Caco-2 (cell line): ENCODE measurements at regions of chr14 and their contacts with region 1.

Region 1: DNA sequence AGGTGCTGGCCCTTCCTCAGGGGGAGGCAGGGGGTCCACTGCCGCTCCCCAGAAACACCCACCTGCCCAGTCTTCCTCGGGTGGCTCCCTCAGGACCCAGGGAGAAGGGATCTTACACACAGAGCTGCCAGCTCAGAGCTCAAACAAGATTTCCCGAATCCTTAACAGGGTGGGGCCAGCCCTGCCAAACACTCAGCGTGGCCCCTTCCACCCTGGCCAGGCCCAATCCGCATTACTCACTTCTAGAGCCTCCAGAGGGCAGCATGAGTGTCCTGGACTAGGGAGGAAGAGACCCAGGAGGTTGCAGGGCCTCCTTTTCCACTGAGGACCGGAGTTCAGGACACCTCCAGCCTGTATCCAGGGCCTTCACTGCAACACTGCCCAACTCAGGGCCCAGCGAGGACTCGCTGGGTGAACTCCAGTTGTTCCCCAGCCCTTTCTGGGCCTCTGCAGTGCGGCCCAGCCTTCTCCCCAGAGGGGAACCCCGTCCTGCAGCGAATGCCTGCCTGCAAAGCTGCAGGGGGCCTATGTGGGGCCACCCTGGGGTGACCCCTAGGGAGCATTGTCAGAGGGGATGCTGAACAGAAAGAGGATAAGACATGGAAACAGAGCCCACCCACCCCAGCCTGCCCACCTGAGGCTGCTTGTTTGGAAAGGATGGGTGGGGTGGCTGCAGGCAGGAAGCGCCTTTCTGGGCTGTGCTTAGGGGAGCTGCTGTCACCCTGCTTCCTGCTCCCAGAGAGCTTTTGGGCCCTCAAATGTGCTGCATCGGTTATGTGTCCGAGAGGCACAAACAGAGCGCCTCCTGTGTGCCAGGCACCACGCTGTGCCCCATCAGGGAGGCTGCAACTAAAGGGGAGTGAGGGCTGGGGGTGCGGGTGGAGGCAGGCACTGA is 43.8 kb downstream of the CCNK start:
- DNase-seq: peak; percentile 62 to 69
- H3K4me3 ChIP-seq: no peak overlapping the region
- H3K4me3 Mint-ChIP-seq: no peak overlapping the region
- H3K27ac Mint-ChIP-seq: peak overlapping the region; percentile 84
- H3K4me1 ChIP-seq: peaks cover 47% of the 10 kb centered on the region
- H3K4me1 Mint-ChIP-seq: peaks cover 8% of the 10 kb centered on the region
- H3K27me3 ChIP-seq: no peaks in the 10 kb centered on the region
- H3K27me3 Mint-ChIP-seq: no peaks in the 10 kb centered on the region
- CTCF ChIP-seq: peak; percentile 23 to 28

Region 2: GRCh38 chr14:99441157-99441870 is 83.7 kb before region 1 on chr14:
- CTCF ChIA-PET with region 1: no interaction called
- POLR2A ChIA-PET with region 1: no interaction called
- intact Hi-C with region 1: no loop called
- DNase-seq: peak in 1 of 2 experiments; percentile 38
- H3K4me3 ChIP-seq: no peak overlapping the region
- H3K4me3 Mint-ChIP-seq: no peak overlapping the region
- H3K27ac Mint-ChIP-seq: no peak overlapping the region
- H3K4me1 ChIP-seq: no peaks in the 10 kb centered on the region
- H3K4me1 Mint-ChIP-seq: no peaks in the 10 kb centered on the region
- H3K27me3 ChIP-seq: no peaks in the 10 kb centered on the region
- H3K27me3 Mint-ChIP-seq: no peaks in the 10 kb centered on the region
- CTCF ChIP-seq: peak in 1 of 2 experiments; percentile 64

Region 3: DNA sequence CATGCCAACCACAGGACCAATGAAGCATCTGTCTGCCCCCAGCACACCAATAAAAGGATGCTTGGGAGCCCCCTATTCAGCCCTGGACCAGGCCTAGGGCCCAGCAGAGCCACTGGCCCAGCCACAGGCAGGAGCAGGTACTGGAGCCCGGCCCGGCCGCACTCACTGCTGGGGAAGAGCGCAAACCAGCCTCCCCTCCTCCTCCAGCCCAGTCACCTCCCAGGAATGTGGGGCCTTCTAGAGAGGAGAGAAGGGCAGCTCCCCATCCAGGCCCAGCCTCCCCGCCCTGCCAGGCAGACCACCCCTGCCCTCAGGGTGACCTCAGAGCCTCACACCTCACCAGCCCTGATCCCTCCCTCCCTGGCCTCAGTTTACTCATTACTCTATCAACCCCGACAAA is 12.3 kb after region 1 on chr14:
- CTCF ChIA-PET with region 1: interaction called, 15 read pairs
- POLR2A ChIA-PET with region 1: no interaction called
- intact Hi-C with region 1: loop called (anchors 2 kb)
- DNase-seq: peak; percentile 49 to 52
- H3K4me3 ChIP-seq: no peak overlapping the region
- H3K4me3 Mint-ChIP-seq: no peak overlapping the region
- H3K27ac Mint-ChIP-seq: peak overlapping the region; percentile 71
- H3K4me1 ChIP-seq: peaks cover 22% of the 10 kb centered on the region
- H3K4me1 Mint-ChIP-seq: peaks cover 5% of the 10 kb centered on the region
- H3K27me3 ChIP-seq: no peaks in the 10 kb centered on the region
- H3K27me3 Mint-ChIP-seq: no peaks in the 10 kb centered on the region
- CTCF ChIP-seq: no peak

Region 4: GRCh38 chr14:99628832-99629618 is 104.0 kb after region 1 on chr14:
- CTCF ChIA-PET with region 1: interaction called, 3 read pairs
- POLR2A ChIA-PET with region 1: no interaction called
- intact Hi-C with region 1: loop called (anchors 1 kb)
- DNase-seq: peak; percentile 78 to 87
- H3K4me3 ChIP-seq: no peak overlapping the region
- H3K4me3 Mint-ChIP-seq: no peak overlapping the region
- H3K27ac Mint-ChIP-seq: no peak overlapping the region
- H3K4me1 ChIP-seq: no peaks in the 10 kb centered on the region
- H3K4me1 Mint-ChIP-seq: peaks cover 7% of the 10 kb centered on the region
- H3K27me3 ChIP-seq: no peaks in the 10 kb centered on the region
- H3K27me3 Mint-ChIP-seq: no peaks in the 10 kb centered on the region
- CTCF ChIP-seq: peak; percentile 91 to 98

Region 5: GRCh38 chr14:99884834-99885648 is 360.0 kb after region 1 on chr14:
- CTCF ChIA-PET with region 1: no interaction called
- POLR2A ChIA-PET with region 1: no interaction called
- intact Hi-C with region 1: loop called (anchors 5 kb)
- DNase-seq: peak in 1 of 2 experiments; percentile 64
- H3K4me3 ChIP-seq: no peak overlapping the region
- H3K4me3 Mint-ChIP-seq: no peak overlapping the region
- H3K27ac Mint-ChIP-seq: no peak overlapping the region
- H3K4me1 ChIP-seq: no peaks in the 10 kb centered on the region
- H3K4me1 Mint-ChIP-seq: no peaks in the 10 kb centered on the region
- H3K27me3 ChIP-seq: no peaks in the 10 kb centered on the region
- H3K27me3 Mint-ChIP-seq: no peaks in the 10 kb centered on the region
- CTCF ChIP-seq: peak; percentile 66 to 74